ENCODE measurements at regions of chr18 and their contacts with region 1.

Region 1: GRCh38 chr18:63518178-63519012 is 23.8 kb upstream of the SERPINB12 start:
- DNase-seq: no peak

Region 2: DNA sequence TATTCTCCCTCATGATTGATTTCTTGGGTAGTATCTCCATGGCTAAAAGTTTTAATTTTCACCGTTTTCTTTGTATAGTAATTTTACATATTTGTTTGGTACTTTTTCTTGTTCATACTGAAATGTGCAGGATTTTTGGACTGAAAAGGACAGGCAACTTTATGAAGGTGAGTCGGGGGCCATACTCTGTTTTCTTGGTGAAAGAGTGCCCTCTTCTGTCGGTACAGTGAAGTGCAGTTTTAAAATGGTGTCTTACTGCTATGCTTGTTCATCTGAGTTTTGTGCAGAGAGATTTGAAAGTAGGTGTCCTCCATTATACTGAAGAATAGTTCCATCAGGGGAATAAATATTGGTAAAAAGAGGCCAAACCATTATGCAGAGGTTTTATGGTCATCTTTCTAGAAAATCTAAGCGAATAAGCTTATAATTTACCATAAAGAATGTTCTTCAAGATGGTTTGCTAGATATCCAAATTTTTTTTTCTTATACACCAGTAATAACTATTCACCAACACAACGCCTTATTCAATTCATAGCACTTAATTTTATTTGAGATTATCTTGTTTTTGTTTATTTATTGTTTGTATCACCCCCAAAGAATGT is 60.1 kb after region 1 on chr18:
- intact Hi-C with region 1: loop called (anchors 5 kb)
- DNase-seq: no peak

Region 3: DNA sequence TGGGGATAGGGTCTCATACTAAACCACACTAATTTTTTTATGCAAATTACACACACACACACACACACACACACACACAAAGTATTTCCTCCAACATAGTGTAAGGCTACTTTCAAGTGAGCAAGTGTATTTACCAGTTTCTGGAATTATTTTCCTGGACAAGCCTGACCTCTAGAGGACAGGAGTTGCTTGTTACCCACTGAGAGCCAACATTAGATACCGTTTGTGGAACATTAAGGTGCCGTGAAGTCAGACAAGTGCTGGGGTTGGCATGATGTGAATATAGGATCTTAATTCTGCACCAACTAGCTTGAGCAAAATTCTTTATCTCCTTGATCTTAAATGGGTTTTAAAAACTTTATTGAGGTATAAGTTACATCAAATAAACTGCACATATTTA is 329.8 kb after region 1 on chr18:
- intact Hi-C with region 1: loop called (anchors 10 kb)
- DNase-seq: no peak